H1 (cell line): ENCODE measurements at regions of chr12 and their contacts with region 1.

Region 1: DNA sequence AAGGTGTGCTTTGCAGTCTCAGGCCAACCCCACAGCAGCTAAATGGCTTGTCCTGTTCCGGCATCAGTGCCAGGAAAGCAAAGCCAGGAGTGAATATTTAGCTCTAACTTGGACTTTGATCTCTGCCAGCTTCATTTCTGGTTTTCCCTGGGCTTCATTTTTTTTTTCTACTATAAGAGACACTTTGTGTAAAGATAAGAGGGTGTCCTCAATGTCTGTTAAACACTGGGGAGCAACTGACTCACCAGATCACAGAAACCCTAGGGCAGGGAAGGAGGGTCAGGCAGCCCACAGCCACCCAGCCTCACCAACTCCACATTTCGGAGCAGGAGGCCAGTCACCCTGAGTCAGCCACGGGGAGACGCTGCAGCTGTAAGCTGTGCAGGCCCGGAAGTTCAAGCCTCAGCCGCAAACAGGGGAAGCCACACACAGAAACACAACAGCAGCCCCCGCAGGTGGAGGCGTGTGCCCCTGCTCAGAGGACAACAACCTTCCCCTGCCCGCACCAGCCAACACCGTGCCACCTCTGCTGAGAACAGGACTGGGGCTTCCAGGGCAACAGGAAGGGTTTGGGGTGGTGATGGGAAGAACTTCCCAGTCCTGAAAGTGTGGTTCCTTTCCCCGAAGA is 6.3 kb downstream of the TNFRSF1A start:
- DNase-seq: peak in 1 of 2 experiments; percentile 70
- H3K4me3 ChIP-seq: peak overlapping the region in 3 of 4 experiments; percentile 5 to 51 (median 37); a peak in 4 of 8 replicates
- H3K27ac ChIP-seq: peak overlapping the region; percentile 88
- H3K4me1 ChIP-seq: peaks cover 19 to 48% (median 29%) of the 10 kb centered on the region in 4 experiments
- H3K27me3 ChIP-seq: no peaks in the 10 kb centered on the region
- CTCF ChIP-seq: peak in 2 of 3 experiments; percentile 48 to 53; a peak in 3 of 4 replicates
- EP300 ChIP-seq: no peak
- POLR2A ChIP-seq: no peak
- RAD21 ChIP-seq: peak; percentile 45 to 64

Region 2: DNA sequence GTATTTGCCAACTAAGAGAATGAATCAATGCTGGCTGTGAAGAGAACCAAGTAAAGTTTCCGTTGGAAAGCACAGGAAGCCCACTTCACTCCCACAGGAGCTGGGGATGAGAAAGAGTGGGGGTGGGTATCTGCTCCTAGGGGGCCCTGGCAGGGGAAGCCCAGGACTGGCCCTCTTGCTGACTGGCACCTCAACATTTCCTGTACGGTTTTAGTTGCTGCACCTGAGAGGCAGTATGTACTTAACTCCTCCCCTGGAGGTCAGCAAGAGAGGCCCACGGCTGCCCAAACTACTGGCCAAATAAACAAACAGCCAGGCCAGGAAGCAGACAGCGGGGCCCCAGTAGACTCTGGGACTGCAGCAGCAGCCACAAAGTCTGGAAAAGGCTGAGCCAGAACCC is 177.3 kb before region 1 on chr12:
- CTCF ChIA-PET with region 1: no interaction called
- POLR2A ChIA-PET with region 1: no interaction called
- DNase-seq: no peak
- H3K4me3 ChIP-seq: no peak overlapping the region
- H3K27ac ChIP-seq: no peak overlapping the region
- H3K4me1 ChIP-seq: no peaks in the 10 kb centered on the region
- H3K27me3 ChIP-seq: no peaks in the 10 kb centered on the region
- CTCF ChIP-seq: no peak
- EP300 ChIP-seq: no peak
- POLR2A ChIP-seq: no peak
- RAD21 ChIP-seq: no peak

Region 3: DNA sequence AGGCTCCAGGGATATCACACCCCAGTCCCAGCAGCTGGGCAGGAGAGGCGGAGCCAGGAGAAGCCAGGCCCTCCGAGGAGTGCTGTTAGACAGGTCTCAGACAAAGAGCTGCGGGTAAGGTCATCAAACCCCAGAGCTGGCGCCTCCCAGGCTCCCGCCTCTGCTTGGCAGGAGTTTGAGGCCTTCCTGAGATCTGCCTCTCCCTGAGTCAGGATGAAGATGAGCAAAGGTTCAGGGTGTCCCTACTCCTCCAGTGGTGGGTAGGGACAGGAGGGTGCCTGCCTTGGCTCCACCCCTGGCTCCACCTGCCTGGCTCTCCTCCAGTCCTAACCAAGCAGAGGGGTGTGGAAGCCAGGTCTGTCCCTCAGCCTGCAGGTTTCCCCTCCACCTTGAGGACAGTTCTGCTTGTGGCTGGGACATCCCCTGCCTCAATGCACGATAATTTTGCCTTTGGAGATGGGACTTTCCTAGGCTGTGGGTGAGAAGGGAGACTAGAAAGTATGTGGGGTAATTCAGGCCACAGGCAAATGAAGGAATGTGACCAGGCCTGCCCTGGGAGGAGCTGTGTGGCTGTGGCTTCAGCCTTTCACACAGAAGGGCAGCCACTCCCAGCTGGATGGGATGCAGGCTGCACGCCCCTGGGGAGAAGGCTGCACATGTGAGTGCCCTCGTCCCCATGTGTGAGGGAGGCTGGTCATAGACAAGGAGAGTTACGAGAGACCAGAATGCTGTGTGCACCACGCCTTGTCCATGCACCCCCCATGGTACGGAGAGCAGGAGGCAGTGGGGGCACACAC is 22.8 kb before region 1 on chr12:
- CTCF ChIA-PET with region 1: interaction called, 3 read pairs
- POLR2A ChIA-PET with region 1: interaction called, 13 read pairs
- DNase-seq: peak in 1 of 2 experiments; percentile 83
- H3K4me3 ChIP-seq: no peak overlapping the region
- H3K27ac ChIP-seq: no peak overlapping the region
- H3K4me1 ChIP-seq: peaks cover 4 to 28% (median 20%) of the 10 kb centered on the region in 4 experiments
- H3K27me3 ChIP-seq: peaks cover 0 to 4% (median 2%) of the 10 kb centered on the region in 4 experiments; a peak in 4 of 7 replicates
- CTCF ChIP-seq: no peak
- EP300 ChIP-seq: no peak
- POLR2A ChIP-seq: no peak
- RAD21 ChIP-seq: no peak

Region 4: DNA sequence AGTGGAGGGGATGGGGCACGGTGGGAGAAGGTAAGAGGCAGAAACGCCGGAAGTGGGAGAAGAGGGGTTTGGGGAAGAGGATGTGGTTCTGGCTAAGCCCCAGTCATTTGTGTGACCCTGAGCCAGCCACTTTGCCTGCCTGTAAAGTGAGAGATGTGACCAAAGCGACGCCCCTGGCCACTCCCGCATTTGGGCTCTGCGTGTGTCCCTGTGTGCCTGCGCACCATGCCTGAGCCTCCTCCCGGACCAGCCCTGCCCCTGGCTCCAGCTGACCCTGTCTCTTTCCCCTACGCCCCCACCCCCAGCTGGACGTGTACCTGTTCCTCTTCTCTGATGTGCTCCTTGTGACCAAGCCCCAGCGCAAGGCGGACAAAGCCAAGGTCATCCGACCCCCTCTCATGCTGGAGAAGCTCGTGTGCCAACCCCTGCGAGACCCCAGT is 17.1 kb before region 1 on chr12:
- CTCF ChIA-PET with region 1: interaction called, 6 read pairs
- POLR2A ChIA-PET with region 1: interaction called, 31 read pairs
- DNase-seq: no peak
- H3K4me3 ChIP-seq: no peak overlapping the region
- H3K27ac ChIP-seq: no peak overlapping the region
- H3K4me1 ChIP-seq: peaks cover 4 to 18% (median 9%) of the 10 kb centered on the region in 4 experiments
- H3K27me3 ChIP-seq: no peaks in the 10 kb centered on the region
- CTCF ChIP-seq: no peak
- EP300 ChIP-seq: no peak
- POLR2A ChIP-seq: no peak; a peak in 1 of 3 replicates
- RAD21 ChIP-seq: no peak

Region 5: DNA sequence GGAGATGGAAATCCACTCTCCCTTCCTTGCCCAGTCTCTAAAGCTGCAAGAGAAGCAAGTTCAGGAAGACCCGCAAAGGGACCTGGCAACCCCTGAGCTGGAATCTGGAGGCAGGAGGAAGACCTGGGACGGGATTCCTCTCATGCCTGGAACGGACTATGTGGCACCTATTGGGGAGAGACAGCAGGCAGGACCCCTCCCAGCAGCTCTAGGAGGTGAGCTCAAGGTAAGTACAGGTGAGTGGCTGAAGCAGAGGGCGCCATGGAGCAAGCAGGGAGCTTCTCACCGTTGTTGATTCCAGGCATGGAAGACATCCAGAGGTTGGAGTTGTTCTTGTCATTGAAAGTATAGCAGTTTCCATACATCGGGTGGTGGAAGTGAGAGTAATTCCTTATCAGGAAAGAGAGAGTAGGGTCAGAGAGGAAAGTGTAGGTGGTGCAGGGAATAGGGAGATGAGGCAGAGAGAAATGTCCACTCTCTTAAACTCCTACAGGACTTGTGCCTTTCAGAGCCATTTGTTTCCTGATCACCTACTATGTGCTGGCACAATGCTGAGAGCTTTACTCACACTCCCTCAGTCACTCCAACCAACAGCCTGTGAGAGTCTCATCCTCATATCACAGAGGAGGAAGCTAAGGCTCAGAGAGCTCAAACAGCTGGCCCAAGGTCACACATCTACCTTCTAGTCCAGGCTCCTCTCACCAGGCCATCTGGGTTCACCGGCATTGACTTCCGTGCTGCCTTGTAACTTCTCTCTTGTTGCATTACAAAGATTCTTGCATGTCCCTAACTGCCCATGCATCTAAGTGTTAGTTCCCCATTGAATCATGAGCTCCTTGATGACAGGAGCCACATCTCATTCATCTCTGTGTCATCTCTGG is 20.2 kb after region 1 on chr12:
- CTCF ChIA-PET with region 1: interaction called, 29 read pairs
- POLR2A ChIA-PET with region 1: interaction called, 141 read pairs
- DNase-seq: peak; percentile 53 to 74
- H3K4me3 ChIP-seq: no peak overlapping the region
- H3K27ac ChIP-seq: no peak overlapping the region
- H3K4me1 ChIP-seq: peaks cover 0 to 9% (median 0%) of the 10 kb centered on the region in 4 experiments; a peak in 4 of 7 replicates
- H3K27me3 ChIP-seq: no peaks in the 10 kb centered on the region
- CTCF ChIP-seq: peak; percentile 50 to 72 (median 69)
- EP300 ChIP-seq: 0 out of 3 replicates have a peak, but pooled peaks of 1 of the 2 experiments have one; percentile 22
- POLR2A ChIP-seq: no peak
- RAD21 ChIP-seq: peak; percentile 43 to 60; a peak in 3 of 4 replicates

Region 6: DNA sequence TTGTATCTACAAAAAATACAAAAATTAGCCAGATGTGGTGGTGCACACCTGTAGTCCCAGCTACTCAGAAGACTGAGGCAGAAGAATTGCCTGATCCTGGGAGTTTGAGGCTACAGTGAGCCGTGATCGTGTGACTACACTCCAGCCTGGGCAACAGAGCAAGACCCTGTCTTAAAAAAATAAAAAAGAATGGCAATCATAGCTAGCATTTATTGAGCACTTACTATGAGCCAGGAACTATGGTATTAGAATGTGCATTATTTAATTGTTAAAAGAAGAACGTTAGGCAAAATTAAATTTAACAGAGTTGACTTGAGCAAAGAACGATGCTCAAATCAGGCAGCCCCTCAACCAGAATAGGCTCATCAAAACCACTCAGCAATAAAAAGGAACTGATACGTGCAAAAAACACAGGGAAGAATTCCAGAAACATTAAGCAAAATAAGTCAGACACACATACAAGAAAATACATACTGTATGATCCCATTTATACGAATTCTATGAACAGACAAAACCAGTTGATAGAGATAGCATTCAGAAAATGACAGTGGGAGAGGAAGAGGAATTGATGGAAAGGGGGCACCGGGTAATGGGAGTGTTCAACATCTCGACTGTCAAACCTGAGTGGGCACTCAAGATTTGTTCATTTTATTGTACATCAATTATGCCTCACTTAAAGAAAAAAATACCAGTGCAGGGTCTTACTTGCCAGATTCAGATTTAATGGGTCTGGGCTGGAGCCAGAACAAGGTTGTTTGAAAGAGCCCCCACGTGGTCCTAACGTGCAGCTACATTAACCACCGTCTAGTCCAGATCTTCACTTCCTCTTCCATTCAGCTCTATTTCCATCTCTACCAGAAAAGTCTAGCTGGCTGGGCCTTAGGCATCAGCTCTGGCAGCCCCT is 31.8 kb after region 1 on chr12:
- CTCF ChIA-PET with region 1: interaction called, 66 read pairs
- POLR2A ChIA-PET with region 1: interaction called, 259 read pairs
- DNase-seq: no peak
- H3K4me3 ChIP-seq: no peak overlapping the region
- H3K27ac ChIP-seq: no peak overlapping the region
- H3K4me1 ChIP-seq: peaks cover 10 to 23% (median 14%) of the 10 kb centered on the region in 4 experiments
- H3K27me3 ChIP-seq: no peaks in the 10 kb centered on the region
- CTCF ChIP-seq: 0 out of 4 replicates have a peak, but pooled peaks of 1 of the 3 experiments have one; percentile 3
- EP300 ChIP-seq: no peak
- POLR2A ChIP-seq: no peak
- RAD21 ChIP-seq: peak in 1 of 2 experiments; percentile 9; a peak in 1 of 4 replicates

Region 7: GRCh38 chr12:6376079-6376869 is 40.7 kb after region 1 on chr12:
- CTCF ChIA-PET with region 1: interaction called, 66 read pairs
- POLR2A ChIA-PET with region 1: interaction called, 259 read pairs
- DNase-seq: peak; percentile 54 to 74
- H3K4me3 ChIP-seq: peak overlapping the region; percentile 64 to 84 (median 74)
- H3K27ac ChIP-seq: peak overlapping the region; percentile 92
- H3K4me1 ChIP-seq: peaks cover 5 to 47% (median 33%) of the 10 kb centered on the region in 4 experiments
- H3K27me3 ChIP-seq: peaks cover 0 to 2% (median 0%) of the 10 kb centered on the region in 4 experiments; a peak in 2 of 7 replicates
- CTCF ChIP-seq: peak in 2 of 3 experiments; percentile 41 to 58; a peak in 3 of 4 replicates
- EP300 ChIP-seq: no peak
- POLR2A ChIP-seq: peak in 1 of 2 experiments; percentile 69; a peak in 2 of 3 replicates
- RAD21 ChIP-seq: peak; percentile 30 to 55

Region 8: GRCh38 chr12:6383572-6384498 is 48.3 kb after region 1 on chr12 and contains the start of gene LTBR:
- CTCF ChIA-PET with region 1: interaction called, 5 read pairs
- POLR2A ChIA-PET with region 1: interaction called, 214 read pairs
- DNase-seq: peak in 1 of 2 experiments; percentile 85
- H3K4me3 ChIP-seq: peak within 1 kb of the TSS in 1 of 4 experiments; percentile 37; a peak in 2 of 8 replicates
- H3K27ac ChIP-seq: no peak within 1 kb of the TSS
- H3K4me1 ChIP-seq: peaks cover 0 to 27% (median 20%) of the 10 kb centered on the region in 4 experiments; a peak in 6 of 7 replicates
- H3K27me3 ChIP-seq: peaks cover 0 to 26% (median 20%) of the 10 kb centered on the region in 4 experiments; a peak in 6 of 7 replicates
- CTCF ChIP-seq: 0 out of 4 replicates have a peak, but pooled peaks of 1 of the 3 experiments have one; percentile 3
- EP300 ChIP-seq: no peak
- POLR2A ChIP-seq: no peak; a peak in 1 of 3 replicates
- RAD21 ChIP-seq: peak in 1 of 2 experiments; percentile 11; a peak in 1 of 4 replicates
- total RNA-seq, gene LTBR: 6.3 and 6.7 TPM in 2 replicates

Region 9: GRCh38 chr12:6407236-6407954 is 71.8 kb after region 1 on chr12:
- CTCF ChIA-PET with region 1: no interaction called
- POLR2A ChIA-PET with region 1: no interaction called
- DNase-seq: no peak
- H3K4me3 ChIP-seq: no peak overlapping the region
- H3K27ac ChIP-seq: no peak overlapping the region
- H3K4me1 ChIP-seq: no peaks in the 10 kb centered on the region
- H3K27me3 ChIP-seq: no peaks in the 10 kb centered on the region
- CTCF ChIP-seq: no peak
- EP300 ChIP-seq: no peak
- POLR2A ChIP-seq: no peak
- RAD21 ChIP-seq: no peak